Colonic mucosa (tissue), 4 donors: ENCODE measurements at regions of chr2 and their contacts with region 1.

Region 1: DNA sequence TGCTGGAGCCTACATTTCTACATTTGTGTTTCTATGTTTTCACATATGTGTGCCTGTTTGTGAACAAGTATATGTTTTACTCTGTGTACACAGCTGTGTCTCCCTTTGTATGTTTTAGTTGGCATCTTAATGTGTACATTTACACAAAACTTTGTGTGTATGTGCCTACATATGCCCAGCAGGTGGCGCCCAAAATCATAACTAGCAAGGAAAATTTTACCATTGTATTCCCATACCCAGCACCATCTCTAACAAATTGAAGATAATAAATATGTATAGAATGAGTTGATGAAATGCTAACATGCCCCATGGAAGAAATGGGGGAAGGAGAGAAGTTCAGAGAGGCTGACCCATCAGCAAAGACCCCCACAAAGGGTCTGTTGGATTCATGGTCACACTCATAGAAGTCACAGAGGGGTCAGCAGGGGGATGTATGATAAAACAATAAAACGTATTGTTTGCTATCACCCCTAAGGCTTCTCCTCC is 48.1 kb downstream of the PKDCC start:
- DNase-seq: peak; percentile 87
- H3K4me3 ChIP-seq: no peak overlapping the region
- H3K27ac ChIP-seq: no peak overlapping the region
- H3K4me1 ChIP-seq: peaks cover 12% of the 10 kb centered on the region
- H3K27me3 ChIP-seq: no peaks in the 10 kb centered on the region
- CTCF ChIP-seq: peak; percentile 79

Region 2: GRCh38 chr2:41764930-41765329 is 331.0 kb before region 1 on chr2:
- intact Hi-C with region 1: no loop called
- DNase-seq: no peak
- H3K4me3 ChIP-seq: no peak overlapping the region
- H3K27ac ChIP-seq: no peak overlapping the region
- H3K4me1 ChIP-seq: no peaks in the 10 kb centered on the region
- H3K27me3 ChIP-seq: no peaks in the 10 kb centered on the region
- CTCF ChIP-seq: no peak

Region 3: DNA sequence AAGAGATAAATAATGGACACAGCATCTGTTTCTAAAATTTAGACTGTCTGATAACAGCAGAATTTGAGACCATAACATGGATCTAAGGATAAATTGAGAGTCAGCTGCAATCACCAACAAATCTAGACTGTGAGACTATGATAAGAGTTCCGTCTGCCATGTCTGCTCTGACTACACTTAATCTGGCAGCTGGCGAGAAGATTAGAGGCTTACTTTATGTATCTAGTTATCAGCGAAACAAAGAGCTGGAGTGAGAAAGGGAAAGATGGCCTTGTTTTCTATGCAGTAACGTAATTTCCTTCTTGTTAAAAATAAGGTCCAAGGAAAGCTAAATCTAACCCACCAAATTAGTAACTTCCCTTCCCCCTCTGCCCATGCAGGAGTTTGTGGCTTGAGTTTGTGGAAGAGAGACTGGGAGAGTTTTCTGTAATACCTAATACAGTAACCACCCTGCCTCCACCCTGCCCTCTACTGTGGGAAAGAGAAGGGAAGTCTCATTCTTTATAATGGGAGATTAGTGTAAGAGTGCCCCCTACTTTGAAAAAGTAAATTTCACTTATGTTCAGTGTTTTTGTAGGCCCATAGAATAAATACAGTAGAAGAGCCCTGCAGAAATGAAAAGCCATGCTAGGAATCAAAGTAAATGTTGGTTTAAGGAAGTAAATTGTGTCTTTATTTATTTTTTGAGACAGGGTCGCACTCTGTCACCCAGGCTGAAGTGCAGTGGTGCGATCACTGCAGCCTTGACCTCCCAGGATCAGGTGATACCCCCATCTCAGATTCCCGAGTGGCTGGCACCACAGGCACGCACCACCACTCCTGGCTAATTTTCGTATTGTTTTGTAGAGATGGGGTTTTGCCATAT is 100.7 kb after region 1 on chr2:
- intact Hi-C with region 1: loop called (anchors 5 kb)
- DNase-seq: peak; percentile 76
- H3K4me3 ChIP-seq: no peak overlapping the region
- H3K27ac ChIP-seq: peak overlapping the region; percentile 7
- H3K4me1 ChIP-seq: no peaks in the 10 kb centered on the region
- H3K27me3 ChIP-seq: no peaks in the 10 kb centered on the region
- CTCF ChIP-seq: peak; percentile 26

Region 4: GRCh38 chr2:42238644-42239288 is 142.8 kb after region 1 on chr2:
- intact Hi-C with region 1: loop called (anchors 2 kb)
- DNase-seq: peak; percentile 68
- H3K4me3 ChIP-seq: no peak overlapping the region
- H3K27ac ChIP-seq: no peak overlapping the region
- H3K4me1 ChIP-seq: peaks cover 8% of the 10 kb centered on the region
- H3K27me3 ChIP-seq: no peaks in the 10 kb centered on the region
- CTCF ChIP-seq: peak; percentile 28

Region 5: GRCh38 chr2:42321452-42322064 is 225.6 kb after region 1 on chr2:
- intact Hi-C with region 1: loop called (anchors 5 kb)
- DNase-seq: no peak
- H3K4me3 ChIP-seq: no peak overlapping the region
- H3K27ac ChIP-seq: no peak overlapping the region
- H3K4me1 ChIP-seq: no peaks in the 10 kb centered on the region
- H3K27me3 ChIP-seq: no peaks in the 10 kb centered on the region
- CTCF ChIP-seq: no peak

Region 6: DNA sequence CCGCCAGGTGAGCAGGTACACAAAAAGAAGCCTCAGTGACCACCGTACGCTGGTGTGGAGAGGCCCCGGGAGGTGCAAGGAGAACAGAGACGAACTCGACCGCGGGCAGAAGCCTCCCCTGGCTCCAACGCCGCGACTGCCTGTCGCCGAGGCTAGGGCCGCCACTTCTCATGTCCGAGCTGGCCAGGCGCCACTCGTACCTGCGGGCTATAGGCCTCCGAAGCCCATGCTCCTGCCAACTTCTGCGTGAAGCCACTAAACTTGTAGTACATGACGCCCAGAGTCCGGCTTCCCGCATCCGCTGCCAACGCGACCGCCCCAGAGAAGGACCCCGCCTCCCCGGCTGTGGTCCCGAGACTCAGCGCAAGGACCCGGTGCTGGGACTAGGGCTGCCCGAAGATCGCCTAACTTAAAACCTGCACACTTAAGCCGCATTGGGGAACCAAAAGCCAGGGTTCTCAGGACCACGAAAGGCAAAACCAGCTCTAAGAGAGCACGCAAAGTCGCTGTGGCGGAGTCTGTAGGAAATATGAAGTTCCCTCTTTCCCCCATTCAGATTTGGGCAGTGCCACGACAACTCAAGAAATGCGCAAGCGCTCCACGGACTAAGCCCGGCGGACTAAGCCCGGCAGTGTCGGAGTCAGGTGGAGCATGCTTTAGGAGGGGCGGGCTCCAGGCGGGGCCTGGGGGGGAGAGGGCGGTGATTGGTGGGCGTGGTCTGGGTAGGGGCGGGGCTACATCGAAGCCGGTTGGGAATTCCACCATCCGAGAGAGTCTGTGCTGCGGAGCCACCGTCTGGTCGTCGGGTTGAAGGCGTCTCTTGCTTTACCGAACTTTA is 265.1 kb after region 1 on chr2 and contains the start of gene COX7A2L:
- intact Hi-C with region 1: loop called (anchors 10 kb)
- DNase-seq: peak; percentile 99
- H3K4me3 ChIP-seq: peak within 1 kb of the TSS; percentile 93
- H3K27ac ChIP-seq: peak within 1 kb of the TSS; percentile 94
- H3K4me1 ChIP-seq: peaks cover 13% of the 10 kb centered on the region
- H3K27me3 ChIP-seq: no peaks in the 10 kb centered on the region
- CTCF ChIP-seq: no peak
- total RNA-seq, gene COX7A2L: 128 to 131 TPM

Region 7: GRCh38 chr2:42480402-42480801 is 384.4 kb after region 1 on chr2:
- intact Hi-C with region 1: no loop called
- DNase-seq: no peak
- H3K4me3 ChIP-seq: no peak overlapping the region
- H3K27ac ChIP-seq: no peak overlapping the region
- H3K4me1 ChIP-seq: no peaks in the 10 kb centered on the region
- H3K27me3 ChIP-seq: no peaks in the 10 kb centered on the region
- CTCF ChIP-seq: no peak